ENCODE measurements at regions of chrX and their contacts with region 1.

Region 1: GRCh38 chrX:104195489-104196084 is 29.3 kb downstream of the FAM199X start:
- ATAC-seq: peak in 3 of 8 experiments; percentile 36 to 43 (median 38)
- H3K4me3 ChIP-seq: no peak overlapping the region
- H3K27ac ChIP-seq: no peak overlapping the region
- H3K4me1 ChIP-seq: no peaks in the 10 kb centered on the region

Region 2: DNA sequence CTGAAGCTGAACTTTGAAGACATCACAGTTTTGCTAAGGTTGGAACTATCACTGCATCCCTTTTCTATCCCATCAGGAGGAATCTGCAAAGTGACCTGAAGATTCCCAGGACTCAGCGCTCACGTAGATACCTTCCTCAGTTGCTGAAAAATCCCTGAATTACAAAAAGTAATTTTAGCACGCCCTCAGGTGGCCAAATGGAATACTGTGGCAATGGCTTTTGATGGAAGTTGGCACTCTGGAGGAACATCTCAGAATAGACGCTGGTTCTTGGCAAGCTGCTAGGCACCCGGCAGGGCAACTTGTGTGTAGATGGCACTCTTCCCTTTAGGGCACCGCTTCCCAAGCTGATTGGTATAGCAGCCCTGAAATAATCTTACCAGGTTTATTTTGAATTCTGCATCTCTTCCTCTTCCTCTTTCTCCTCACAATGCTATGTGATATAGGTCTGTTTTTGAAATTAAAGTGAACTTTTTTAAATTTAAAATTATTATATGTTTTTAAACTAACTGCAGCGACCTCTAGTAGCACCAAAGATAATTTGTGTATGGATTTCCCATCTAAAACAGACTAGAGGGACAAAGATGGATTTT is 75.4 kb after region 1 on chrX:
- in situ Hi-C with region 1: loop called in 1 of 9 experiments (anchors 10 kb)
- ATAC-seq: peak in 2 of 8 experiments; percentile 56 to 71
- H3K4me3 ChIP-seq: no peak overlapping the region
- H3K27ac ChIP-seq: no peak overlapping the region
- H3K4me1 ChIP-seq: no peaks in the 10 kb centered on the region

Measured in motor neuron (in vitro differentiated cells).